Upper lobe of right lung (tissue), 1 donor: ENCODE measurements at regions of chr9 and their contacts with region 1.

Region 1: DNA sequence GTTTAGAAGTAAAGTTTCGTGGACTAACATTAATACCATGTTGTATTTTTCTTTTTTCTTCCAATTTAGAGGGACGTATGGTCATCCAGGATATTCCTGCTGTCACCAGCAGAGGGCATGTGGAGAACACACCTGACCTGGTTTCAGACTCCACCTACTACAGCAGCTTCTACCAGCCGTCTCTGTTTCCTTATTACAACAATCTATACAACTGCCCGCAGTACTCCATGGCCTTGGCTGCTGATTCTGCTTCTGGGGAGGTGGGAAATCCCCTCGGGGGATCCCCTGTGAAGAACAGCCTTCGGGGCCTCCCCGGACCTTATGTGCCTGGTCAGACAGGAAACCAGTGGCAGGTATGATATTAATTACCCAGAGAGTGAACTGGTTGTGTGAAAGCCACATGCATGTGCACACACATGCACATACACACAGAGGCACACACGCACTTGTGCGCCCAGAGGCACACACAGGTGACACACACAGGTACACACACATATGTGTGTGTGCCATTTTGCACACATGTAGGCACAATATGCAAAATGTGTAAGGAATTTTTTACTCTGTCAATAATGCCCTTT is 52.4 kb downstream of the DMRT1 start:
- DNase-seq: no peak
- ATAC-seq: peak; percentile 98
- H3K4me3 ChIP-seq: no peak overlapping the region
- H3K27ac ChIP-seq: no peak overlapping the region
- H3K4me1 ChIP-seq: peaks cover 7% of the 10 kb centered on the region
- H3K27me3 ChIP-seq: no peaks in the 10 kb centered on the region
- CTCF ChIP-seq: peak; percentile 81

Region 2: DNA sequence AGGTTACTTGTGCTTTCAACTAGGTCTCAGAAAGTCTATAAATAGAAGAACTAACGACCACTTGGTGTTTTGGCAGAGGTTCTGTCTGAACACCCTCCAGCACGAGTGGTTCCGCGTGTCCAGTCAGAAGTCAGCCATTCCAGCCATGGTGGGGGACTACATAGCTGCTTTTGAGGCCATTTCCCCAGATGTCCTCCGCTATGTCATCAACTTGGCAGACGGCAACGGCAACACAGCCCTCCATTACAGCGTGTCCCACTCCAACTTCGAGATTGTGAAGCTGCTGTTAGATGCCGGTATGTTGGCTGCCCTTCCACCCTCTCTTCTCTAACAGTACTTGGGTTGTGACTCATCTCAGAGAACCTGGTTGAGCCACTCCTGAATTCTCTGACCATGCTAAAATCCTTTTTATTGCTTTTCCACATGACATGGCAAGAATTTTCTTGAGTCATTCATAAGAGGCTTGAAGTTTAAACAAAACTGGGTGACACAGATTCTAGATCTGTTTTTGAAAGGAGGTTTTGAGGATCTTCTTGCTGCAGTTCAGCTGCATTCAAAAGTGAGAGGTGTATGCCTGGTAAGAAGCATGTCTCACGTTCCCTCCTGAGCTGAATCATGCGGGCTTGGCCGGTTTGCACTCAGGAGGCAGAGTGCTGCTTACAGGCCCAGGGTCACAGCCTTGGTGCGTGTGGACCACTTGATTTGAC is 155.6 kb before region 1 on chr9:
- intact Hi-C with region 1: no loop called
- DNase-seq: peak; percentile 69
- ATAC-seq: peak; percentile 86
- H3K4me3 ChIP-seq: no peak overlapping the region
- H3K27ac ChIP-seq: peak overlapping the region; percentile 61
- H3K4me1 ChIP-seq: peaks cover 33% of the 10 kb centered on the region
- H3K27me3 ChIP-seq: no peaks in the 10 kb centered on the region
- CTCF ChIP-seq: no peak

Region 3: GRCh38 chr9:982394-983230 is 88.7 kb after region 1 on chr9:
- intact Hi-C with region 1: no loop called
- DNase-seq: no peak
- ATAC-seq: no peak
- H3K4me3 ChIP-seq: no peak overlapping the region
- H3K27ac ChIP-seq: no peak overlapping the region
- H3K4me1 ChIP-seq: no peaks in the 10 kb centered on the region
- H3K27me3 ChIP-seq: peaks cover 88% of the 10 kb centered on the region
- CTCF ChIP-seq: no peak

Region 4: DNA sequence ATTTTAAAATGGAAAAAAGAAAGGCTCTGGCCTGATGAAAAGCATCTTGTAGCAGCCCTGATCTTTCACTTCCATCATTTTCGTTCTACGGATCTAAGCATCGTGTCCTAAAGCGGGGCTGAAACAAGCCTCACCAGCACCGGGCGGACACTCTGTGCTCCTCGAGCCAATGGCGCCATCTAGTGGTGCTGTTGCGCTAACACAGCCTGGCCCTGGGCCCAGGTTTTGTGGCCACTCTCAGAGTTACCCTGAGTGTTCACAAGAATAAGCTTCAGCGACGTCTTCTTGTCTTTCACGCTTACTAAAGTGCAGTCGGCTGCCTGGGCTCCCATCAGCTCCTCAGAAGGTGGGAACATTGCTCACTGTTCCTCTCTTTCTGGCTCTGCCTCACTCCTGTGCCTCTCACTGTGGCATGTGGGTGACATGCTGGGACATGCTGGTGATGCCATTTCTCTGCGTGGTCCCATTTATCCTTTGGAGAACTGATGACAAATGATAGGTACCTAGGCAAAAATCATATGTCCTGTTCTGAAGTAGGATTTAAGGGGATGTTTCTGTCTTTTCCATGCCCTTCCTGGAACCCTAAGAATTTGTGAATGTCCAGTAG is 115.3 kb after region 1 on chr9:
- intact Hi-C with region 1: loop called (anchors 5 kb)
- DNase-seq: peak; percentile 90
- ATAC-seq: peak; percentile 97
- H3K4me3 ChIP-seq: no peak overlapping the region
- H3K27ac ChIP-seq: no peak overlapping the region
- H3K4me1 ChIP-seq: no peaks in the 10 kb centered on the region
- H3K27me3 ChIP-seq: no peaks in the 10 kb centered on the region
- CTCF ChIP-seq: peak; percentile 99

Region 5: DNA sequence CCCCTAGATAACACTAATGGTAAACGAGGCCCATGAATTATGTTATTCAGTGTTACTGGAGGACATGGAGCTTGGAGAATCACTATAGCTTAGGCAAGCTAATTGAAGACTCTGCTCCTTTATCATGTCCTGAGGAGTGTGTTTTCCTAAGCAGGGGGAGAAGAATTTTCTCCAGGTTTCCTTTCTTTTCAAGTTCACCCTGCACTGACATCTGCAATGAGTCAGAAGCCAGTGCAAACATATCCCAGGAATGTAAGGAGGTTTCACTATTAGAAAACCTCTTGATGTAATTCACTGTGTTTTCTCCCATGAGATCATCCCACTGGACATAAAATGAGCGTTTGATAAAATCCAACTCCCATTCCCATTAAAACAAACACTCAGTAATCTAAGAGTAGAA is 231.8 kb after region 1 on chr9:
- intact Hi-C with region 1: no loop called
- DNase-seq: no peak
- ATAC-seq: no peak
- H3K4me3 ChIP-seq: no peak overlapping the region
- H3K27ac ChIP-seq: no peak overlapping the region
- H3K4me1 ChIP-seq: no peaks in the 10 kb centered on the region
- H3K27me3 ChIP-seq: no peaks in the 10 kb centered on the region
- CTCF ChIP-seq: no peak